ENCODE measurements at regions of chr22 and their contacts with region 1.

Region 1: DNA sequence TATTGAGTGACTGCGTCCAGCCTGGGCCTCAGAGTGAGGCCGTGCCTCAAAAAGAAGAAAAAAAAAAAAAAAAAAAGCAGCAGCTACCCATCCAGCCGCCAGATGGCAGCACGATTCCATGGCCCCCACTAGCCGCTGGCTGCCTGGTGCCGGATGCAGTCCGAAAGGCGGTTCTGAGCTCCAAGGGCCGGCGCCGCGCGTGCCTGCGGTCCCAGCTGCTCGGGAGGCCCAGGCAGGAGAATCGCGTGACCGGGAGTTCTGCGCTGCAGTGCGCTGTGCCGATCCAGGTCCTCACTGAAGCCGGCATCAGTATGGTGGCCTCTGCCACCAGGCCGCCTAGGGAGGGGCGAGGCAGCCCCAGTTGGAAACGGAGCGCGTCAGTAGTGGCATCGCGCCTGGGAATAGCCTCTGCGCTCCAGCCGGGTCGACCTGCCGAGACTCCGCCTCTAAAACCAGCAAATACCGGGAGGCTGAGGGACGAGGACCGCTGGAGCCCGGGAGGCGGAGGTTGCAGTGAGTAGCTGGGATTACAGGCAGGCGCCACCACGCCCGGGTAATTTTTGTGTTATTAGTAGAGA is 19.3 kb downstream of the SCARF2 start:
- DNase-seq: peak in 1 of 2 donors; percentile 87
- H3K4me3 ChIP-seq: peak overlapping the region; percentile 38 to 62
- H3K27ac ChIP-seq: peak overlapping the region; percentile 41 to 53
- H3K4me1 ChIP-seq: peaks cover 0 to 7% of the 10 kb centered on the region in 2 donors
- H3K27me3 ChIP-seq: no peaks in the 10 kb centered on the region
- CTCF ChIP-seq: peak; percentile 76 to 89 (median 78)

Region 2: DNA sequence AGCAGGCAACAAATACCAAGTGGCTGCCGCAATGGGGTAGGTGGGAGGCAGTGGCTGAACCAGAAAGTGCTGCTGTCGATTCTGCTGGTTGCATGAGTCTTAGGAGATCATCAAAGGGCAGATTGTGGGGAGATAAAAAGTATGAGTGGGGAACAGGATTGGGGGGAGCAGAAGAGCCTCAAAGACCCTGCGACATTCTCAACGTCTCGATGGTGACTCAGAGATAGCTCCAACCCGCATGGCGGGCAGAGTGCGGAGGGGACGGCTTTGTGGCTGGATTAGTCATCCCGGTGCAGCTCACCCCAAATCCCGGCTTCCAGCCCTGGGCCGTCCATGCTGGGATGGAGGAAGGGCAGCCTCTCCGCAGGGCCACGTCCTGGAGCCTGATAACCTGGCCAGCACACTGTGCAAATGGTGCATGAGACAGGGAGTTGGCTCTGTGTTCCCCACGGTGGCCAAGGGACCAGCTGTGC is 138.6 kb before region 1 on chr22:
- intact Hi-C with region 1: no loop called
- DNase-seq: no peak
- H3K4me3 ChIP-seq: no peak overlapping the region
- H3K27ac ChIP-seq: no peak overlapping the region
- H3K4me1 ChIP-seq: no peaks in the 10 kb centered on the region
- H3K27me3 ChIP-seq: no peaks in the 10 kb centered on the region
- CTCF ChIP-seq: no peak

Region 3: DNA sequence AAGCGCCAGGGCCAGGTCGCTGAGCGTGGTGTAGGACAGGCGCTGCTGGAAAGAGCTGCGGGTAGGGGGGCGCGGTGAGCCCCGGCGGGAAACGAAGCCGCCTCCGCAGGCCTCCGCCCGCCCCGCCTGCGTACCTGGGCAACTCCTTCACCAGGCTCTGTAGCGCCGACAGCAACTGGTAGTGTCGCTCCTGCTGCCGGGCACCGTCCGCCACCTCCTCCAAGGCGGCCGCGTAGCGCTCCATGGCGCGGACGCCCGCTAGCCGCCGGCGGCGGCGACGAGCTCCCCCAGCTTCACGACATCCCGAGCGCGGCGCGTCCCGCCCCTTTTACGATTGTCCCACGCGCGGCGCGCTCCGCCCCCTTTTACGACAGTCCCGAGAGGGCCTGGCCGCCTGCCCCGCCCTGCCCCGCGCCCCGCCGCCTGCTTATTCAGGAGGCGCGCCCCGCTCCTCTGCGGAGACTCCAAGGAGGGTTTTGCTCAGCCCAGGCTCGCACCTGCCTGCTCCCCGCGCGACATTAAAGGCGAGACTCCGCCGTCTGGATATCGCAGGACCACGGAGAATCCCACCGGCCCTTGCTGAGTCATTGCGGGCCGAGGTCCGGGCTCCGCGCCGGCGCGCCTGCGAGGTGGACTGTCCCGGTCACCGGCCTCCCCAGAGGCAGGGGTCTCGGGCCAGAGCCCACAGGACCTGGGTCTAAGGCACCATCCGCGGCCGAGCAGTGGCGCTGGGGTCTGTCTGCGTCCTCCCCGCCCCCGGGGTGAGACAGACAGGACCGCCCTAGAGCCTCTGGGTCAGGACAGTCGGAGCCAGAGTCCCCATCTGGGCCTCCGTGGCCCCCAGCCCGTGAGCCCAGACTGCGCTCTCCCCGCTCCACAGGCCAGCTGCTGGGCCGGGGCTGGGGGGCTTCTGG is 98.3 kb before region 1 on chr22 and contains the start of gene DGCR6L:
- intact Hi-C with region 1: no loop called
- DNase-seq: peak; percentile 82 to 97
- H3K4me3 ChIP-seq: peak within 1 kb of the TSS; percentile 79 to 100
- H3K27ac ChIP-seq: peak within 1 kb of the TSS; percentile 80 to 91
- H3K4me1 ChIP-seq: peaks cover 0 to 26% of the 10 kb centered on the region in 2 donors
- H3K27me3 ChIP-seq: no peaks in the 10 kb centered on the region
- CTCF ChIP-seq: no peak
- total RNA-seq, gene DGCR6L: 42.1 TPM

Region 4: DNA sequence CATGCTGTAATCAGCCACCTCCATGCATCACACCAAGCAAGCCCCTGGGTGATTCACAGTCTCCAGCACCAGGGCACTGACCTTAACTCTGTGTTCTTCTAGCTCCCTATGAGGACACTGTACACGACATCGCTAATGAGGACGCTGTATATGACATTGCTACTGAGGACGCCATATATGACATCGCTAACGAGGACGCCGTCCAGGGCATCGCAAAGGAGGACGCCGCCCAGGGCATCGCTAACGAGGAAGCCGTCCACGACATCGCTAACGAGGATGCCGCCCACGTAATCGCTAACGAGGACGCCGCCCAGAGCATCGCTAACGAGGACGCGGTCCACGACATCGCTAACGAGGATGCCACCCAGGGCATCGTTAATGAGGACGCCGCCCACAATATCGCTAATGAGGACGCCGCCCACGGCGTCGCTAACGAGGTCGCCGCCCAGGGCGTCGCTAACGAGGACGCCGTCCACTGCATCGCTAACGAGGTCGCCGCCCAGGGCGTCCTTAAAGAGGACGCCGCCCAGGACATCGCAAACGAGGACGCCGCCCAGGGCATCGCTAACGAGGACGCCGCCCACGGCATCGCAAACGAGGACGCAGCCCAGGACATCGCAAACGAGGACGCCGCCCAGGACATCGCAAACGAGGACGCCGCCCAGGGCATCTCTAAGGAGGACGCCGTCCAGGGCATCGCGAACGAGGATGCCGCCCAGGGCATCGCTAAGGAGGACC is 63.9 kb before region 1 on chr22:
- intact Hi-C with region 1: no loop called
- DNase-seq: no peak
- H3K4me3 ChIP-seq: no peak overlapping the region
- H3K27ac ChIP-seq: no peak overlapping the region
- H3K4me1 ChIP-seq: no peaks in the 10 kb centered on the region
- H3K27me3 ChIP-seq: no peaks in the 10 kb centered on the region
- CTCF ChIP-seq: no peak

Region 5: DNA sequence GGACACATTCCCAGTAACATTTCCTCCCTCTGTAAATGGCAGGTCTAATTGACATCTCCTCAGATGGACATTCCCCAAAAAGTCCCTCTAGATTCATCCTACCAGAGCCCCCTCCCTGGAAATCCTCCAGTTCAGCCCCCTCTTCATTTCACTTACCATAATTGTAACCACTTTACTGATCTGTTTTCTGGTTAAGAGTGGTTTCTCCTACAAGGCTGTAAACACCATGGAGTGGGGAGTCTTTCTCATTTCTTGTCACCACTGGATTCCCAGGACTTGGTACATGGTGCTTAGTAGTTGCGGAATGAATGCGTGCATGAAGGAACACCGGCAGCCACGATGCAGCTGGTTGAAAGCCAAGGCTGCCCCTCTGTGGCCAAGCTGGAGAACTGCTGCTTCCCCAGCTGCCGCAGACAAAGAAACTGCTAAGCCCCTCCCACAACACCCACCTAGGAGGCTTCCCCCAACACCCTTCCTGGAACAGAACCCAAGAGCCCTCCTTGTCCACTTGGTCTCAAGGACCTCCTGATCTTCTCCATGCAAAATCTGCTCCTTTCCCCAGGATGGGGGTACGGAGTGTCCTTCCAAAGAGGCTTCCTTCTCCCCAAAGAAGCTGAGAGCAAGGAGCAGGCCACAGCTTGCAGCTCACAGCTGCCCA is 37.9 kb after region 1 on chr22:
- intact Hi-C with region 1: loop called (anchors 1 kb)
- DNase-seq: peak in 1 of 2 donors; percentile 81
- H3K4me3 ChIP-seq: no peak overlapping the region
- H3K27ac ChIP-seq: no peak overlapping the region
- H3K4me1 ChIP-seq: no peaks in the 10 kb centered on the region
- H3K27me3 ChIP-seq: no peaks in the 10 kb centered on the region
- CTCF ChIP-seq: peak; percentile 90 to 92 (median 90)

Region 6: DNA sequence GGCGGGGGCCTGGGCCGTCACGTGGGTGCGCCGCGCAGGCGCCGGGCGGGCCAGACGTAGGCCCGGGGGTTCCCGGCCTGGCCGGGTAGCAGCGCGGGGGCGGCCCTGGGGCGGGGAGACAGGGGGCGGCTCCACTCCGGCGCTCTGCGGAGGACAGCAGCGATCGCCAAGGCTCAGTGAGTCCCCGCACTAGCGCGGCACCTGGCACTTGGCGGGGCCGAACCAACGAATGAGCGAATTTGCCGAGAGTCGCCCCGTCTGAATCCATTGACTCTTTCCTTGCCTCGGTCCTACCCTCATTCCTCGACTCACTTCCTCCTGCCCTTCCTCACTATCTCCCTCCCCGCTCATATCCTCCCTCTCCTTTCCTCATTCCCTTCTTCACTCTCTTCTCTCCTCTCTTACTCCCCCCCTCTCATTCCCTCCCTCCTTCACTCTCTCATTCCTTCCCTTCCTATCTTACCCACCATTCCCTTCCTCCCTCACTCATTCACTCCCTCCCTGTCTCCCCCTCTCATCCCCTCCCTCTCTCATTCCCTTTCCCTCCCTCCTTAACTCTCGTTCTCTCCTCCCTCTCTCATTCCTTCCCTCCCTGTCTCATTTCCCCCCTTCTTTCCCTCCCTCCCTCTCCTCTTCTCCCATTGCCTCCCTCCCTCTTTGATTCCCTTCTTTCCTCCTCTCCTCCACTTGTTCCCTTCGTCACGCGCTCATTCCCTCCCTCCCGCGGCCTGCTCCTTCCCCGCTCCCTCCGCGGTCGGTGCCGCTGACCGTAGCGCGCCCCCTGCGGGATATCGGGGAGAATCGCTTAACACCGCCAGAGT is 77.8 kb after region 1 on chr22:
- intact Hi-C with region 1: loop called (anchors 1 kb)
- DNase-seq: peak; percentile 57 to 94
- H3K4me3 ChIP-seq: peak overlapping the region; percentile 93 to 96
- H3K27ac ChIP-seq: peak overlapping the region; percentile 90 to 99
- H3K4me1 ChIP-seq: peaks cover 0 to 20% of the 10 kb centered on the region in 2 donors
- H3K27me3 ChIP-seq: no peaks in the 10 kb centered on the region
- CTCF ChIP-seq: peak; percentile 86 to 92 (median 88)